GM10248 (cell line): ENCODE measurements at regions of chr2 and their contacts with region 1.

Region 1: DNA sequence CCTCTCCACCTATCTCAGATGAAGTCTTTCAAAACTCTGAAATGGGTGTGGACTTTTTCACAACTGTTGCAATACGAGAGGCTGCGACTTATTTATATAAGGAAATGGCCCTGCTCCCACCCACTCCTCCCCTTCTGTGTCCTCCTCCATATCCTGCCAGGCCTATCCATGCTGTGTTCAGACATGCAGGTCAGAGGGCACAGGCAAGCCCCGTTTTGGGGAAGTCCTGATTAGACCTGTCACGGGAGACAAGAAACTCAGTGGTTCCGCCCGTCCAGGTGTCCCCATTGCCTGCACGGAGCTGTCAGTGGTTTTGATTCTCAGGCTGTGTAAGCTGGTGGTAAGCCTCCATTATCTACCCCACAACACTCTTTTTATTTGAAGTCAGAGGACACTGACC is 99.6 kb upstream of the MGAT5 start:
- DNase-seq: peak; percentile 52
- CTCF ChIP-seq: no peak

Region 2: DNA sequence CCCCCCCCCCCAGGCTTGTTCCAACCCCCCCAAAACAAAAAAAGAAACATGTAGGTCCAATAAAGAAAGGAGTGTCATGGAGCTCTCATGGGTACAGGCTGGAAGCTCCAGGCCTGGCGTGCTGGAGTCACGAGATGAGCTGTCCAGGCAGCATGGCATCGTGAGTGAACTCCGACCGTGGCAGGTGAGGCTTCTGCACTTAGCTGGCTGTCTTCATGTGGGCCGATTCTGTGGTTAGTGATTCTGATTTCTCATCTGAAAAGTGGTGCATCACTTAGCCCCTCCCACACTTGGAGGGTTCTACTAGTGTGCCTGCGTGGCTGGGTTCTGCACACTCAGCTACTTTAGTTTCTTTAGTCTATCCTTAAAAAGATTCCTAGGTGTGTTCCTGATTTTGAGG is 26.8 kb before region 1 on chr2:
- CTCF ChIA-PET with region 1: interaction called, 16 read pairs
- POLR2A ChIA-PET with region 1: no interaction called
- DNase-seq: peak; percentile 40
- CTCF ChIP-seq: no peak

Region 3: GRCh38 chr2:134167019-134167600 is 12.9 kb after region 1 on chr2:
- CTCF ChIA-PET with region 1: interaction called, 23 read pairs
- POLR2A ChIA-PET with region 1: no interaction called
- DNase-seq: no peak
- CTCF ChIP-seq: no peak

Region 4: GRCh38 chr2:134173338-134174016 is 19.2 kb after region 1 on chr2:
- CTCF ChIA-PET with region 1: interaction called, 16 read pairs
- POLR2A ChIA-PET with region 1: no interaction called
- DNase-seq: no peak
- CTCF ChIP-seq: no peak

Region 5: DNA sequence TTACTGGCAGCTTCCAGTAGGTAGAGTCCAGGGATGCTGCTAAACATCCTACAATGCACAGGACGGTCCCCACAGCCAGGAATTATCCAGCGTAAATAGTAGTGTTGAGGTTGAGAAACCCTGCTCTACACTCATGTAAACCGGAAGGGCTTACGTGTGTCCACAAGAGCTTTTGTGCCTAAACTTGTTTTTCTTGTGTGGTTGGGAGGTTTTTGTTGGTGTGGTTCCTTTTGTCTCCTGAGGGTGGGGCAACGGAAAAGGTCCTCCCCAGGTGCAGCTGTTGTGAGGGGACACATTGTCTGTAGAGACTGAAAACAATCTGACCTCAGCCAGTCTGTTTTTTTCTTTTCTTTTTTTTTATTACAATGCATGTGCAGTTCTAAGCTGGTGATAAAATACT is 27.0 kb after region 1 on chr2:
- CTCF ChIA-PET with region 1: interaction called, 12 read pairs
- POLR2A ChIA-PET with region 1: no interaction called
- DNase-seq: no peak
- CTCF ChIP-seq: no peak

Region 6: DNA sequence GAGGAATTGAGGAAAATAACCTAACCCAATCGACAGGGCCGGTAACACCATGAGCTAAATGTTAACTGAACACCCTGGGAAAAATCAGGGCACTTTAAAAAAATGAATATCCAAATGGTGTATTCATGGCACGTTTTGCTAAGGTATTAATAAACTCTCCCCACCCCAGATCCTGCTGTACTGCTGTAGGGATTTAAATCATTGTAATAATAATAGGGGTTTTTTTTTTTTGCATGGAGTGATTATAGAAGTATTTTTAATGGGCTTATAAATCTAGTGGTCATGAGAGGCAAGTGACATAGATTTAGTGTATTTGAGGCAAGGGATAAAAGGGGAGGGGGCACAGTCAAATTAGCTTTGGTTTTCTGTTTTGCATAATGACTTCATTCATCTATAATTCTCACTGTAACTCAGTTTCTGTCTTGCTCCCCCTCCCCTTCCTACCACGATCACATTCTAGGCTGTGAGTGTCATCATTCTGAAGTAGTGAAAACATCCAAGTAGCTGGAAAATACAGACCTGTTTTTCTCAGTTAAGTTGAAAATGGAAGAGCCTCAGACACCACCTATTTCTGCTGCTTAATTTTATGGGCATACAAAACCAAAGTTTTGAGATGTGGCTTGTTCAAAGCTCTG is 81.4 kb after region 1 on chr2:
- CTCF ChIA-PET with region 1: no interaction called
- POLR2A ChIA-PET with region 1: no interaction called
- DNase-seq: no peak
- CTCF ChIP-seq: no peak

Region 7: DNA sequence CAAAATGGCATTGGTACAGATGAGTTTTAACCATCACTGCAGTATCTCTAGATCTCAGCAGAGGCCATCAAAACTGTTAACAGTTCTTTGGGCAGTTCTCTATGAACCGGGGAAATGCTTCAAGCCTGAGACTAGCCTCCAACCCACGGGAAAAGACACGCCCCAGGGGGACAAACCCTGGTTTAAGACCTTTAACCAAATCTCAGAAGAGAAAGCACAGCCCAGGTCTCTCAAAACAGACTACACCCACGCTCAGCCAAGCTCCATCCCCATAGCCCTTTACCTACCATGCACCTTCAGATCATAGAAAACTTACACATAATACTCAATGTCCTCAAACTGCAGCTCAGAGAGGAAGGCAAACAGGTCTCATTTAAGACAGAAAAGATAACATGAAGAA is 486.2 kb after region 1 on chr2:
- CTCF ChIA-PET with region 1: no interaction called
- POLR2A ChIA-PET with region 1: no interaction called
- DNase-seq: no peak
- CTCF ChIP-seq: no peak